ENCODE measurements at regions of chr14 and their contacts with region 1.

Region 1: DNA sequence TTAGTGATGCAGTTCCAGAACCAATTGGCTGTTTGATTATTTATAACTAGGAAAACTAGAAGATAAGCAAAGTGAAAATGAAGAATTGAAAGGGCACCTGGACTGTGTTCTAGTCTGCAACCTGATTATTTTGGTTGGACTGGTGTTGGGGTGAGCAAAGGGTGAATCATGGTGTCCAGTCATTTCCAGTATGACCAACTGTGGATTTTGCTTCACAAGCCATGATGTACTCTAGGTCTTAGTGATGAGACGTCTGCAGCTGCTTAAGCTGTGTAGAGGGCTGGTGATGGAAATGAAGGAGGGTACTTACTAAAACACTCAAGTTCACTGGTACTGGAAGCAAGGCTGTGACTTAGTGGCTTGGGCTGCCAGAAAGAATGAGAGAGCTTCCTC is 193.2 kb upstream of the FRMD6 start:
- DNase-seq: peak; percentile 90
- ATAC-seq: peak; percentile 97
- H3K4me3 ChIP-seq: 0 out of 2 replicates have a peak overlapping the region, but pooled peaks have one; percentile 8
- H3K27ac ChIP-seq: peak overlapping the region; percentile 57
- H3K4me1 ChIP-seq: peaks cover 32% of the 10 kb centered on the region
- H3K27me3 ChIP-seq: no peaks in the 10 kb centered on the region
- CTCF ChIP-seq: no peak

Region 2: DNA sequence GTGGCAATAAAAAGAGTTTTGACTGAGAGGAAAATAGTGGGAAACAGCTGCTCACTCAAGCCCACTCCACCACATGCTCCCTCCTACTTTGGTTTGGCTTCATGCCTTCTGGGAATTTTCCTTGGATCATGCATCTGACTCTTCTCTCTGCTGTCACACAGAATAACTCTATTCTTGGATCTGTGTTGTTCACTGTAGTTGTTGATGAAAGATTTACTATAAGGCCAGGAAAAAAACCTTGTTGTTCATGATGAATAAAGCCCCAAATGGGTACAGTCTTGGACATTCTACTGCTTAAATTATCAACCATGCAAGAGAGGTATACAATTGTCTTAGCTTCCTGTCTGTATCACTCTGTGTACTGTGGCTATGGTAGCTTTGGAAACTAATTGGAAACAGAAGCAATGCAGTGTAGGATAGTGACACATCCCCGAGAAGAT is 148.0 kb before region 1 on chr14:
- CTCF ChIA-PET with region 1: no interaction called
- POLR2A ChIA-PET with region 1: no interaction called
- intact Hi-C with region 1: no loop called
- DNase-seq: no peak
- ATAC-seq: no peak
- H3K4me3 ChIP-seq: no peak overlapping the region
- H3K27ac ChIP-seq: no peak overlapping the region
- H3K4me1 ChIP-seq: peaks cover 5% of the 10 kb centered on the region; the same call in 1 of the 2 replicates
- H3K27me3 ChIP-seq: no peaks in the 10 kb centered on the region
- CTCF ChIP-seq: no peak

Region 3: DNA sequence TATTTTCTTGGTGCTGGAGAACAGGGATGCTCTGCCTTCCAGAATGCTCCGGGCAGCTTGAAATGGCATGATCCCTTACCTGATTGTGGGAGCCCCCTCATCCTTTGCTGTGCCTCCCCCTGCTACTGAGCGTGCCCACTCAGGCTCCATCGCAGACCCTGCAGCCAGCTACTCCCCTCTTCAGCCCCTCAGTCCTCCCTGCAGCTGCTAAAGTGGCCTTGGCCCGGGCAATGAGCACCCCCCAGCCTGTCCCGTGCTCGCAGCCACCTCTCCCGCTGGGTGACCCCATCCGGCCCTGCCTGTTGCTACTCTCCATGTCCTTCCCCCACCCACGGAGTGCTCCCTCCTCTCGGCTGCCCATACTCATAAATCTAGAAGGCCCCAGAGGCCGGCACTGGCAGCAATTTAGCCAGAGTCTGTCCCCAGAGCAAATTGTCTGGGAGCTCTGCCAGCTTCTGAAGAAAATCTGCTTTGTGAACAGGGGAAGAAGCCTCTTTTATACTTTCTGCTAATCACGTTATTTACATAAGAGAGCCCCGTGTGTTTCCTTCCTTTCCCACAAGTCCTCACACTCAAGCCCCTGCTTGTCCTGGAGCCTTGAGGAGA is 49.5 kb after region 1 on chr14:
- CTCF ChIA-PET with region 1: no interaction called
- POLR2A ChIA-PET with region 1: no interaction called
- intact Hi-C with region 1: no loop called
- DNase-seq: no peak
- ATAC-seq: no peak
- H3K4me3 ChIP-seq: no peak overlapping the region
- H3K27ac ChIP-seq: no peak overlapping the region
- H3K4me1 ChIP-seq: no peaks in the 10 kb centered on the region
- H3K27me3 ChIP-seq: no peaks in the 10 kb centered on the region
- CTCF ChIP-seq: no peak

Region 4: DNA sequence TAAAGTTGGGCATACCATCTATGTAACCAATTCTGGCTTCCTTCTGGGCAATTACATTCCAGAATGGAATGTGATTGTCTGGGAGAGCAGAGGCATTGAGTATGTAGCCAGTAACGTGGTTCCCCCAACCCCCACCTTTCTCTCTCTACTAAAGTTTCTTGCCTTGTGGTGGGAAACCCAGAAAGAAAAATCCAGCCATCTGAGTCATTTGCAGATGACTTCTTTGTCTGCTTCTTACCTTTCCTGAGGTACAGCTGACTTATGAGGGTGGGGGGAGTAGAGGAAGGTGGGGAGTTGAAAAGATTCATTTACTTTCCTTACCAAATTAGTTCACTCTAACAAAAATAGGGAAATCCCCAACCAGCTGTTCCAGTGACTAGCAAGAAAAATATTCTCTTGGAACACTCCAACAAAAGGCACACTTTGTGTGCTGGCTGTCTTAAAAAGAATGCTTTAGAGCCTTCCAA is 81.0 kb after region 1 on chr14:
- CTCF ChIA-PET with region 1: no interaction called
- POLR2A ChIA-PET with region 1: no interaction called
- intact Hi-C with region 1: loop called (anchors 5 kb)
- DNase-seq: peak; percentile 99
- ATAC-seq: peak; percentile 60
- H3K4me3 ChIP-seq: peak overlapping the region; percentile 22; the same call in 1 of the 2 replicates
- H3K27ac ChIP-seq: peak overlapping the region; percentile 96
- H3K4me1 ChIP-seq: peaks cover 50% of the 10 kb centered on the region
- H3K27me3 ChIP-seq: no peaks in the 10 kb centered on the region
- CTCF ChIP-seq: no peak

Region 5: GRCh38 chr14:51547260-51547659 is 88.7 kb after region 1 on chr14:
- CTCF ChIA-PET with region 1: no interaction called
- POLR2A ChIA-PET with region 1: no interaction called
- intact Hi-C with region 1: loop called (anchors 5 kb)
- DNase-seq: peak; percentile 99
- ATAC-seq: peak; percentile 93
- H3K4me3 ChIP-seq: peak overlapping the region; percentile 9; the same call in 1 of the 2 replicates
- H3K27ac ChIP-seq: peak overlapping the region; percentile 91
- H3K4me1 ChIP-seq: peaks cover 54% of the 10 kb centered on the region
- H3K27me3 ChIP-seq: no peaks in the 10 kb centered on the region
- CTCF ChIP-seq: no peak